Dorsolateral prefrontal cortex (tissue), 120 donors: ENCODE measurements at regions of chr5 and their contacts with region 1.

Region 1: GRCh38 chr5:140639148-140639979 is at the start of gene TMCO6:
- DNase-seq: peak; percentile 94 to 98 (median 96)
- H3K4me3 ChIP-seq: peak within 1 kb of the TSS; percentile 51 to 96 (median 83)
- H3K27ac ChIP-seq: peak within 1 kb of the TSS; percentile 63 to 97 (median 90)
- H3K27me3 ChIP-seq: no peaks in the 10 kb centered on the region
- CTCF ChIP-seq: peak; percentile 35 to 86 (median 73)
- total RNA-seq, gene TMCO6: 5.4 to 18.1 (median 10.8) TPM

Region 2: GRCh38 chr5:140372971-140373487 is 266.3 kb before region 1 on chr5:
- intact Hi-C with region 1: loop called (anchors 5 to 10 kb)
- DNase-seq: peak in 8 of 10 donors; percentile 40 to 66 (median 60)
- H3K4me3 ChIP-seq: peak overlapping the region in 1 of 59 donors; percentile 7
- H3K27ac ChIP-seq: peak overlapping the region in 1 of 59 donors; percentile 25
- H3K27me3 ChIP-seq: no peaks in the 10 kb centered on the region
- CTCF ChIP-seq: peak; percentile 52 to 89 (median 83)